Naive thymus-derived CD8-positive, alpha-beta T cell (primary cell): ENCODE measurements at regions of chr19 and their contacts with region 1.

Region 1: DNA sequence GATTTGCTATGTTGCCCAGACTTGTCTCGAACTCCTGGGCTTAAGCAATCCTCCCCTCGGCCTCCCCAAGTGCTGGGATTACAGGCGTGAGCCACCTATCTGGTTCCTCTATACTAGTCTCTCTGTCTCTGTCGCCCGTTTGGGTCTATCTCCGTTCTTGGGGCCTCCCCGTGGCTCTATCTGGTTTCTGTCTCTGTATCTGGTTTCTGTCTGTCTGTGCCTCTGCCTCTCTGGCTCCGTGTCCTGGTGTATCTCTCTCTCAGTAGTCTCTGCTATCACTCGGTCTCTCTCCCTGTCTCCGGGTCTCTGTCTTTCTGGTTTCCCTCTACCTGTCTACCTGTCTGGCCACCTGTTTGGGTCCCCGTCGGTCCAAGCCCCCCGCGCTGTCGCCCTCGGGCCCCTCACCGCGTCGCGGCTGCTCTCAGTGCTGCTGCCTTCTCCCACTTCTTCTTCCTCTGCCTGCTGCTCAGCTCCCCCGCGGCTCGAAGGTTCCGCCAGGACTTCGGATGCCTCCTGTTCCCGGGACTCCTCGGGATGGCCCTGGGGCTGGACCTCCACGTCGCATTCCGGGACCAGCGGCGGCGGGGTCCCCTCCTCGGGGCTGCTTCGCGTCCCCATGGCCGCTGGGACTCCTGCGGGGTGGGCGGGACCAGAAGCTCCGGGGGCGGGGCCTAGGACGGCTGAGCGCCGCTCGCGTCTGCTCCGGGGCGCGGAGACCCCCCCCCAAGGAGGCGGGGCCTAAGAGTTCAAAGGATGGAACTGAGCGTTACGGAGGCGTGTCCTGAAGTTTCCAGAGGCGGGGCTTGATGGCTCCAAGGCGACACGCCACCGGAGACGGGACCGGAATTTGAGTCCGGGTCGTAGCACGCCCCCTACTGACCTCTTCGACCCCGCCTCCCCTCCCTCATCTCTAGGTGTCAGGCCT is 783 bp downstream of the PHLDB3 start:
- DNase-seq: peak; percentile 95 to 100 (median 98)
- ATAC-seq: peak; percentile 89 to 91
- H3K4me3 Mint-ChIP-seq: peak overlapping the region; percentile 86 to 99 (median 96)
- H3K27ac Mint-ChIP-seq: peak overlapping the region; percentile 84 to 99 (median 97)
- H3K4me1 Mint-ChIP-seq: peaks cover 18 to 44% (median 34%) of the 10 kb centered on the region in 4 donors
- H3K27me3 Mint-ChIP-seq: no peaks in the 10 kb centered on the region

Region 2: GRCh38 chr19:43318796-43319314 is 184.9 kb before region 1 on chr19:
- POLR2A ChIA-PET with region 1: no interaction called
- DNase-seq: no peak
- ATAC-seq: no peak
- H3K4me3 Mint-ChIP-seq: no peak overlapping the region
- H3K27ac Mint-ChIP-seq: no peak overlapping the region
- H3K4me1 Mint-ChIP-seq: no peaks in the 10 kb centered on the region
- H3K27me3 Mint-ChIP-seq: peaks cover 2 to 30% (median 11%) of the 10 kb centered on the region in 5 donors

Region 3: GRCh38 chr19:43438291-43439096 is 65.3 kb before region 1 on chr19:
- POLR2A ChIA-PET with region 1: interaction called, 15 read pairs
- DNase-seq: no peak
- ATAC-seq: peak; percentile 8 to 33
- H3K4me3 Mint-ChIP-seq: peak overlapping the region in 9 of 10 donors; percentile 19 to 66 (median 56)
- H3K27ac Mint-ChIP-seq: peak overlapping the region; percentile 74 to 98 (median 94)
- H3K4me1 Mint-ChIP-seq: peaks cover 17 to 62% (median 52%) of the 10 kb centered on the region in 4 donors
- H3K27me3 Mint-ChIP-seq: no peaks in the 10 kb centered on the region

Region 4: DNA sequence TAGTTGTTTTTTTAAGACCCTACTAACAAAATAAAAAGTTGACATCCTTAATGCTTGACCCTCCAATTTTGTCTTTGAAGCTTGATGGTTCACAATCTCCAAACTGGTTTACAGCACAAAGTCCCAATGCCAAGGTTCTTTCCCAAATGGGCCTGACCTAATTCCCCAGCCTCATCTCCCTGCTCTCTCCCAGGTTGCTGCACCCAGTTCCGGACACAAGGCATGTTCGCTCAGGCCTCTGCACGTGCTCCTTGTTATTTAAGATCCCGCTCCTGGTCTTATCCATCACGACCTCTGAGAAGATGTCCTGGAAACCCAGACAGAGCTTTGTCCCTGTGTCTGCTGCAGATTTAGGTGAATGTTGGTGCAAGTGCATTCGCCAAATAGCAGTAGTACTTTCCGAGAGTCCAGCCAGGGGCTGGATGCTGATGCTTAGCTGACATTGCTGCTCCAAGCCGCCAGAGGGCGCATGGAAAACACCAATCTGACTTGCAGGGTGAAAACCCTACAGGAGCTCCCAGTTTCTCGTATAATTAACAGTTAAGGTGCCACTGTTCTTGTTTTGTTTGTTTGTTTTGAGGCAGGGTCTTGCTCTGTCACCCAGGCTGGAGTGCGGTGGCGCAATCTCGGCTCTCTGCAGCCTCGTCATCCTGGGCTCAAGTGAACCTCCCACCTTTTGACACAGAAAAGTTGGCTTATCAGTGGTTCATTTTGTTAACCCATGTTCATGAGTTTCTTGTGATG is 56.8 kb before region 1 on chr19:
- POLR2A ChIA-PET with region 1: interaction called, 12 read pairs
- DNase-seq: peak; percentile 69 to 89 (median 78)
- ATAC-seq: peak; percentile 84 to 95
- H3K4me3 Mint-ChIP-seq: no peak overlapping the region
- H3K27ac Mint-ChIP-seq: peak overlapping the region; percentile 13 to 90 (median 80)
- H3K4me1 Mint-ChIP-seq: peaks cover 12 to 37% (median 21%) of the 10 kb centered on the region in 4 donors
- H3K27me3 Mint-ChIP-seq: no peaks in the 10 kb centered on the region

Region 5: GRCh38 chr19:43474986-43475705 is 28.6 kb before region 1 on chr19:
- POLR2A ChIA-PET with region 1: interaction called, 14 read pairs
- DNase-seq: peak; percentile 88 to 98 (median 98)
- ATAC-seq: peak; percentile 85 to 92
- H3K4me3 Mint-ChIP-seq: peak overlapping the region; percentile 81 to 93 (median 86)
- H3K27ac Mint-ChIP-seq: peak overlapping the region; percentile 92 to 100 (median 99)
- H3K4me1 Mint-ChIP-seq: peaks cover 18 to 52% (median 43%) of the 10 kb centered on the region in 4 donors
- H3K27me3 Mint-ChIP-seq: no peaks in the 10 kb centered on the region

Region 6: GRCh38 chr19:43532962-43533545 is 29.3 kb after region 1 on chr19 and contains the start of gene ZNF575:
- POLR2A ChIA-PET with region 1: interaction called, 16 read pairs
- DNase-seq: peak; percentile 70 to 93 (median 82)
- ATAC-seq: peak; percentile 60 to 70
- H3K4me3 Mint-ChIP-seq: peak within 1 kb of the TSS; percentile 88 to 100 (median 97)
- H3K27ac Mint-ChIP-seq: peak within 1 kb of the TSS; percentile 90 to 99 (median 98)
- H3K4me1 Mint-ChIP-seq: peaks cover 13 to 32% (median 20%) of the 10 kb centered on the region in 4 donors
- H3K27me3 Mint-ChIP-seq: no peaks in the 10 kb centered on the region
- polyA plus RNA-seq, gene ZNF575: 1.7 to 4.1 (median 3.0) TPM